Heart left ventricle (tissue), 16 donors: ENCODE measurements at regions of chr1 and their contacts with region 1.

Region 1: GRCh38 chr1:228457396-228458176 is 29.6 kb upstream of the RNF187 start:
- DNase-seq: peak; percentile 86 to 91 (median 89)
- ATAC-seq: peak; percentile 95 to 96 (median 96)
- H3K4me3 ChIP-seq: peak overlapping the region; percentile 31 to 79 (median 63)
- H3K27ac ChIP-seq: peak overlapping the region; percentile 65 to 96 (median 88)
- H3K4me1 ChIP-seq: peaks cover 0 to 52% (median 14%) of the 10 kb centered on the region in 12 donors
- H3K27me3 ChIP-seq: peaks cover 0 to 40% (median 19%) of the 10 kb centered on the region in 9 donors
- CTCF ChIP-seq: peak in 9 of 12 donors; percentile 7 to 56 (median 30)
- POLR2A ChIP-seq: peak in 1 of 2 donors; percentile 70

Region 2: GRCh38 chr1:228212966-228213844 is 244.4 kb before region 1 on chr1:
- intact Hi-C with region 1: loop called in 1 of 10 experiments (anchors 10 kb)
- DNase-seq: peak; percentile 81 to 93 (median 87)
- ATAC-seq: peak; percentile 43 to 68 (median 64)
- H3K4me3 ChIP-seq: peak overlapping the region in 11 of 12 donors; percentile 24 to 62 (median 47)
- H3K27ac ChIP-seq: peak overlapping the region in 6 of 12 donors; percentile 22 to 99 (median 54)
- H3K4me1 ChIP-seq: peaks cover 0 to 58% (median 20%) of the 10 kb centered on the region in 12 donors
- H3K27me3 ChIP-seq: peaks cover 0 to 10% (median 0%) of the 10 kb centered on the region in 9 donors
- CTCF ChIP-seq: peak in 11 of 12 donors; percentile 27 to 59 (median 46)
- POLR2A ChIP-seq: no peak

Region 3: GRCh38 chr1:228393248-228393699 is 64.3 kb before region 1 on chr1:
- intact Hi-C with region 1: loop called in 1 of 10 experiments (anchors 5 kb)
- DNase-seq: peak in 4 of 5 donors; percentile 56 to 73 (median 69)
- ATAC-seq: peak; percentile 82 to 90 (median 86)
- H3K4me3 ChIP-seq: no peak overlapping the region
- H3K27ac ChIP-seq: peak overlapping the region in 7 of 12 donors; percentile 27 to 60 (median 50)
- H3K4me1 ChIP-seq: peaks cover 0 to 17% (median 10%) of the 10 kb centered on the region in 12 donors
- H3K27me3 ChIP-seq: no peaks in the 10 kb centered on the region
- CTCF ChIP-seq: peak; percentile 32 to 68 (median 54)
- POLR2A ChIP-seq: no peak

Region 4: GRCh38 chr1:228405987-228406265 is 51.7 kb before region 1 on chr1:
- intact Hi-C with region 1: loop called in 2 of 10 experiments (anchors 2 to 5 kb)
- DNase-seq: no peak
- ATAC-seq: peak in 2 of 4 donors; percentile 7 to 30
- H3K4me3 ChIP-seq: peak overlapping the region; percentile 81 to 100 (median 96)
- H3K27ac ChIP-seq: peak overlapping the region in 11 of 12 donors; percentile 82 to 94 (median 89)
- H3K4me1 ChIP-seq: peaks cover 10 to 48% (median 24%) of the 10 kb centered on the region in 12 donors
- H3K27me3 ChIP-seq: no peaks in the 10 kb centered on the region
- CTCF ChIP-seq: no peak
- POLR2A ChIP-seq: no peak

Region 5: DNA sequence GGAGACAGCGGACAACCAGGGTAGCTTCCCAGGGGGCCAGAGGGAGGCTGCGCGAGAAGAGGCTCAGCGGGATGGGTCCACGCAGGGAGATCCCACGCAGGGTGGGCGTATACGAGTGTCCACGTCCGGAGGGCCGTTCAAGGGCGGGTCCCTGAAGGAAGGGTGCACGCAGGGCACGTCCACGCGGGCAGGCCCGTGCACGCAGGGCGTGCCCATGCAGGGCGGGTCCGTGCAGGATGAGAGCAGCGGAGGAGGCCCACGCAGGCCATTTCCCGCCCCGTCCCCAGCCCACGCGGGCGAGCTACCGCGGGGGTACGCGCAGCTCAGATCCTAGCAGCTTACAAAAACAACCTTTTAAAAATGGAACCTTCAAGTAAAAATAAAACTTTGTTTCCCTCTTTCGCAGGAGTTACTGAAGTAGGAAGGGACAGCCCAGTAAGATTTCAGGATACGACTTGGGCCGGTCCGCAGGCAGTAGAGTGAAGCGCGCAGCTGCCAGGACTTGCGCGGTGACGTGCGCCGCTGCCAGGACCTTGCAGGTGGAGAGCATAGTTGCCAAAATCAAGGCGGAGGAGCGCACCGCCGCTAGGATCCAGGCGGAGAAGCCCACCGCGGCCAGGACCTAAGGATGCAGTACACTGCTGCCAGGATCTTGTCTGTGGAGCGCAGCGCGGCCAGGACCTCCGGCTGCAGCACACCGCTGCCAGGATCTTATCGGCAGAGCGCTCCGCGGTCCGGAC is 29.2 kb after region 1 on chr1:
- intact Hi-C with region 1: loop called in 1 of 10 experiments (anchors 2 kb)
- DNase-seq: peak; percentile 74 to 91 (median 83)
- ATAC-seq: peak; percentile 72 to 90 (median 84)
- H3K4me3 ChIP-seq: peak overlapping the region; percentile 66 to 99 (median 74)
- H3K27ac ChIP-seq: peak overlapping the region; percentile 97 to 100 (median 100)
- H3K4me1 ChIP-seq: peaks cover 6 to 46% (median 30%) of the 10 kb centered on the region in 12 donors
- H3K27me3 ChIP-seq: no peaks in the 10 kb centered on the region
- CTCF ChIP-seq: peak in 1 of 12 donors; percentile 6
- POLR2A ChIP-seq: peak in 1 of 2 donors; percentile 23